Adrenal gland (tissue), 19 donors: ENCODE measurements at regions of chr18 and their contacts with region 1.

Region 1: GRCh38 chr18:35143622-35144596 is 96.9 kb upstream of the ZNF397 start:
- DNase-seq: peak; percentile 61 to 86 (median 71)
- H3K4me3 ChIP-seq: no peak overlapping the region
- H3K27ac ChIP-seq: peak overlapping the region in 2 of 5 donors; percentile 35 to 45
- H3K4me1 ChIP-seq: peaks cover 3 to 14% of the 10 kb centered on the region in 2 donors
- H3K27me3 ChIP-seq: no peaks in the 10 kb centered on the region
- CTCF ChIP-seq: peak; percentile 62 to 89 (median 82)
- POLR2A ChIP-seq: no peak

Region 2: GRCh38 chr18:34639687-34640086 is 504.2 kb before region 1 on chr18:
- intact Hi-C with region 1: no loop called
- DNase-seq: peak in 1 of 7 donors; percentile 38
- H3K4me3 ChIP-seq: no peak overlapping the region
- H3K27ac ChIP-seq: no peak overlapping the region
- H3K4me1 ChIP-seq: no peaks in the 10 kb centered on the region
- H3K27me3 ChIP-seq: no peaks in the 10 kb centered on the region
- CTCF ChIP-seq: no peak
- POLR2A ChIP-seq: no peak

Region 3: GRCh38 chr18:34789768-34790344 is 354.1 kb before region 1 on chr18:
- intact Hi-C with region 1: no loop called
- DNase-seq: no peak
- H3K4me3 ChIP-seq: no peak overlapping the region
- H3K27ac ChIP-seq: no peak overlapping the region
- H3K4me1 ChIP-seq: no peaks in the 10 kb centered on the region
- H3K27me3 ChIP-seq: no peaks in the 10 kb centered on the region
- CTCF ChIP-seq: no peak
- POLR2A ChIP-seq: no peak

Region 4: GRCh38 chr18:35005963-35006577 is 137.8 kb before region 1 on chr18:
- intact Hi-C with region 1: loop called (anchors 5 to 10 kb)
- DNase-seq: peak in 1 of 7 donors; percentile 11
- H3K4me3 ChIP-seq: no peak overlapping the region
- H3K27ac ChIP-seq: no peak overlapping the region
- H3K4me1 ChIP-seq: no peaks in the 10 kb centered on the region
- H3K27me3 ChIP-seq: no peaks in the 10 kb centered on the region
- CTCF ChIP-seq: peak; percentile 63 to 83 (median 76)
- POLR2A ChIP-seq: no peak

Region 5: GRCh38 chr18:35095983-35096676 is 47.8 kb before region 1 on chr18:
- intact Hi-C with region 1: loop called in 1 of 2 experiments (anchors 10 kb)
- DNase-seq: no peak
- H3K4me3 ChIP-seq: no peak overlapping the region
- H3K27ac ChIP-seq: no peak overlapping the region
- H3K4me1 ChIP-seq: peaks cover 0 to 8% of the 10 kb centered on the region in 2 donors
- H3K27me3 ChIP-seq: no peaks in the 10 kb centered on the region
- CTCF ChIP-seq: no peak
- POLR2A ChIP-seq: no peak